ENCODE measurements at regions of chr11 and their contacts with region 1.

Region 1: DNA sequence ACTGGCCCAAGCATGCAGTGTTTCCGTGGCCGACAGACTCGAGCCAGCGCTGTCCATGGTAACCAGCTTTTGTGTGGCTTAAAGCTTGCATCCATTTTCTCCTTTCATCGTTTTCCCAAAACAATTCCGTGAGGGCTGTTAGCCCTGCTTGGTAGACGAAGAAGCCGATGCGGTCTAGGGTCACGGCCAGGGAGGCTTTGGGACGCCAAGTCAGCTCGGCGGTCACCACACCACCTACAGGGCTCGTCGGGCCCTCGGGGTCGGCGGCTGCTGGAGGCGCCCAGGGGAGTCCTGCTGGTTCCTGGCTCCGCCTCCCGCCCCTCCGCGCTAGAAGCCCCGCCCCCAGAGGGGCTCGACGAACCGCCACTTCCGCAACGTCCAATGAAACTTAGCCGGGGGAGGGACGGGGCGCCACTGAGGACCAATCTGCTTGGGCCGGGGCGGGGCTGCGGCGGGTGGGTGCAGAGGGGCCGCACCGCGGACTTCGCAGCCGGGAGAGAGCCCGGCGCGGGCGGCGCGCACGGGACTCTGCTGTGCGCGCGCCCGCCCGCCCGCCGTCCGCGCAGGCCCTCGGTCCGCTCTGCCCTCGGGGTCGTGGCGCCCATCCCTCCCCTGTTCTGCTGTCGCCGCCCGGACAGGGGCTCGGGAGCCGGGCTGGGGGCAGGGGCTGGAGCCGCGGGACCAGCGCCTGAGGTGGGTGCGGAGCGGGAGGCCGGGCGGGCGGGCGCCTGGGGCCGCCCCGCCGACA is at the start of gene TIGD3:
- DNase-seq: no peak
- H3K4me3 ChIP-seq: peak within 1 kb of the TSS; percentile 65
- CTCF ChIP-seq: no peak

Region 2: GRCh38 chr11:65251476-65251875 is 103.0 kb before region 1 on chr11:
- CTCF ChIA-PET with region 1: no interaction called
- POLR2A ChIA-PET with region 1: no interaction called
- DNase-seq: no peak
- H3K4me3 ChIP-seq: no peak overlapping the region
- CTCF ChIP-seq: no peak

Region 3: DNA sequence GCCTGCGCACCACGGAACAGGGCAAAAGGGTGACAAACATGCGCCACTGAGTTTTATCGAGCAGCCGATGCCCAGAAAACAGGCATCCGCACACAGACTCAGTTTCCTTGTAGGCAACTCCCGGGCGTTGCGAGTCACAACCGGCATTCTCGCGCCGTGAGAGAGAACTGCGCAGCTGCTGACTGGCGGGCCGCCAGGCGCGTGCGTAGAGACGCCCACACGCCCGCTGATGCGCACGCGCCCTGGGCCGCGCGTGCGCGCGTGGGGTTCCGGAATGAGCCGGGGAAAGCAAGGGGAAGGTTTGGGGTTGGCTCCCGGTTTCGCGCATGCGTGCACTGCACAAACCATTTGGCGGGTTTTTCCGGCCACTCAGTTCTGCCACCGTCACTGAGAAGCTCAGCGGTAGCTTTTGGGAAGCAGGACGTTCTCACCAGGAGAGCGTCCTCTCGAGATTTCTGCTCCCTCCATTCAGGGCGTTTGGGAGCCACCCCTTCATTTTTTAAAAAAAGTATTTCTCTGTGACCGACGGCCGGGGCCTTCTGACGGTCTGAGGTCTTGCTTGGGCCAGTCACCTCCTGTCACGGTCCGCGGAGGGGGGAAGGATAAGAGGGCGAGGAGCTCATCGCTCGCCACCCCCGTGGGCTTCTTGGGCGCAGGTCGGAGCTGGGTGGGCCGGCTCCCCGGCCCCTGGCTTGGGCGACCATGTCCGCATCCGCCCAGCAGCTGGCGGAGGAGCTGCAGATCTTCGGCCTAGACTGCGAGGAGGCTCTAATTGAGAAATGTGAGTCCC is 92.7 kb before region 1 on chr11 and contains the start of gene POLA2:
- CTCF ChIA-PET with region 1: interaction called, 10 read pairs
- POLR2A ChIA-PET with region 1: no interaction called
- DNase-seq: peak; percentile 47
- H3K4me3 ChIP-seq: peak within 1 kb of the TSS; percentile 79
- CTCF ChIP-seq: no peak

Region 4: GRCh38 chr11:65274735-65275682 is 79.4 kb before region 1 on chr11:
- CTCF ChIA-PET with region 1: interaction called, 63 read pairs
- POLR2A ChIA-PET with region 1: no interaction called
- DNase-seq: peak; percentile 92
- H3K4me3 ChIP-seq: no peak overlapping the region
- CTCF ChIP-seq: peak; percentile 69

Region 5: GRCh38 chr11:65340226-65340625 is 14.2 kb before region 1 on chr11:
- CTCF ChIA-PET with region 1: interaction called, 36 read pairs
- POLR2A ChIA-PET with region 1: no interaction called
- DNase-seq: no peak
- H3K4me3 ChIP-seq: no peak overlapping the region
- CTCF ChIP-seq: no peak

Measured in AG04449 (cell line).